Activated naive CD4-positive, alpha-beta T cell treated with anti-CD3 and anti-CD28 coated beads for 36 hours (primary cell): ENCODE measurements at regions of chr1 and their contacts with region 1.

Region 1: DNA sequence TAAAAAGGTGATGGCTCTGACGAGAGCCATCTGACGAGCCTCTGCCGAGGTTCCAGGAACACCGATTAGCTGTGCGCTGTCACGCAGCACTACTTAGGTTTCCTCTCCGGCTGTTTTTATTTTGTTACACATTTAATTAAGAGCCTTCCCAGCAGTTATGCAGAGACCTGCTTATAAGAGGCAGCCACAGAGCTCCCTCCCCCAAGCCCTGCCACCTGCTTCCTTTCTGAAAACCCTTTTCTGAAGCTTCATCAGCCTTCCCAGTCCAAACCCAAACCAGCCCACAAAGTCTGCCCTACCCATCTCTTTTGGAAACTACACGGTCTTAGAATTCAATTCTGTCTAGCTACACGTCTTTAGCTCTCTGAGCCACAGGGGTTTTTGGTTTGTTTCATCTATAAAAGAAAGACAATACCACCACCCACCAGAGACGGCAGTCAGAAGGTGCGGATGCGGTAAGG is 49.1 kb downstream of the ERI3 start:
- DNase-seq: peak; percentile 82
- H3K4me3 Mint-ChIP-seq: peak overlapping the region; percentile 26
- H3K27ac Mint-ChIP-seq: peak overlapping the region; percentile 95
- H3K4me1 Mint-ChIP-seq: peaks cover 34% of the 10 kb centered on the region
- H3K27me3 Mint-ChIP-seq: no peaks in the 10 kb centered on the region

Region 2: GRCh38 chr1:44237721-44238457 is 68.1 kb before region 1 on chr1:
- CTCF ChIA-PET with region 1: no interaction called
- intact Hi-C with region 1: no loop called
- DNase-seq: peak; percentile 62
- H3K4me3 Mint-ChIP-seq: no peak overlapping the region
- H3K27ac Mint-ChIP-seq: no peak overlapping the region
- H3K4me1 Mint-ChIP-seq: peaks cover 6% of the 10 kb centered on the region
- H3K27me3 Mint-ChIP-seq: no peaks in the 10 kb centered on the region

Region 3: GRCh38 chr1:44254392-44254910 is 51.5 kb before region 1 on chr1:
- CTCF ChIA-PET with region 1: interaction called, 3 read pairs
- intact Hi-C with region 1: loop called (anchors 1 kb)
- DNase-seq: peak; percentile 66
- H3K4me3 Mint-ChIP-seq: no peak overlapping the region
- H3K27ac Mint-ChIP-seq: no peak overlapping the region
- H3K4me1 Mint-ChIP-seq: no peaks in the 10 kb centered on the region
- H3K27me3 Mint-ChIP-seq: no peaks in the 10 kb centered on the region

Region 4: GRCh38 chr1:44263568-44264450 is 42.2 kb before region 1 on chr1:
- CTCF ChIA-PET with region 1: interaction called, 3 read pairs
- intact Hi-C with region 1: loop called (anchors 1 kb)
- DNase-seq: no peak
- H3K4me3 Mint-ChIP-seq: no peak overlapping the region
- H3K27ac Mint-ChIP-seq: no peak overlapping the region
- H3K4me1 Mint-ChIP-seq: peaks cover 27% of the 10 kb centered on the region
- H3K27me3 Mint-ChIP-seq: no peaks in the 10 kb centered on the region

Region 5: DNA sequence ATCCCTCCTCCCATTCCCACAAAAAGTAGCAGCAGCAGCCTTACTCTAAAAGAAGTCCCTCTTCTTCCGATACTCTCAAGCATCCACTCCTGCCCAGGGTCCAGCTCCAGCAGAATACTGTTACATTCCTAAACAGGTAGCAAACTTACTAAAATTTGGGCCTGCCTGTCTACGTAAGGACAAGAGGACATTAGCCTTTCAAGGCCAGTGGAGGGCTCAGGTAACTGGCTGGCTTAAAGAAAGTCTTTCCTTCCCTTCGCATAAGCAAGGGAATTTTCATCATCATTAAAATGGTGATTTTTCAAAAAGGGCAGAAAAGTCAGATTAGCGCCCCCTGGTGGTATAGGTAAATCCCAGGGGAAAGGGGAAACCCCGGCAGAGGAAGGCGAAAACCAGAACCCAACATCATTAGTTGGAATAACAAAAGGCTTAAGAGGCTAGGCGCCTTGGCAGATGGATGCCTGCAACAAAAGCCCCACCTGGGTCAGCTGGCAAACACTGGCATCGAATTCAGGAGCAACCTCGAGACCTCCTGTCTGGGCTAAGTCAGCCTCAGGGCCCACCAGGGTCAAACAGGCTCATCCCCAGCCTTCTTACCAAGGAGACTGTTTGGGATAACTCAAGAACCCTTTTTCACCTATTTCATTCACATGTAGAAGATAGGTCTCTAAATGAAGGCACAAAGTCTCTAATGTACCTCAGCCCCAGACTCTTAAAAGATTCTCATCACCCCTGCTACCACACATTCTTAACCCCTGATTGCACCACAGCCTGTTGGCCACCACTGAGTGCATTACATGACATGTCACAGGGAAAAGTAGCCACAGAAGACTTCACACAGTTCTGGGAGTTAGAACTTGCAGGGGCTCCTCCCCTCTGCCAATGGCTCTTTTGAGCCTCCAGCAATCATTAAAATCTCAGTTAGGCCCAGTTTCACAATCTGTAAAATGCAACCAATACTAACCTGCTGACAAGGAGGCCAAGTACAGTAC is 12.4 kb after region 1 on chr1:
- CTCF ChIA-PET with region 1: interaction called, 3 read pairs
- intact Hi-C with region 1: loop called (anchors 1 kb)
- DNase-seq: peak; percentile 75
- H3K4me3 Mint-ChIP-seq: no peak overlapping the region
- H3K27ac Mint-ChIP-seq: peak overlapping the region; percentile 34
- H3K4me1 Mint-ChIP-seq: peaks cover 11% of the 10 kb centered on the region
- H3K27me3 Mint-ChIP-seq: no peaks in the 10 kb centered on the region

Region 6: DNA sequence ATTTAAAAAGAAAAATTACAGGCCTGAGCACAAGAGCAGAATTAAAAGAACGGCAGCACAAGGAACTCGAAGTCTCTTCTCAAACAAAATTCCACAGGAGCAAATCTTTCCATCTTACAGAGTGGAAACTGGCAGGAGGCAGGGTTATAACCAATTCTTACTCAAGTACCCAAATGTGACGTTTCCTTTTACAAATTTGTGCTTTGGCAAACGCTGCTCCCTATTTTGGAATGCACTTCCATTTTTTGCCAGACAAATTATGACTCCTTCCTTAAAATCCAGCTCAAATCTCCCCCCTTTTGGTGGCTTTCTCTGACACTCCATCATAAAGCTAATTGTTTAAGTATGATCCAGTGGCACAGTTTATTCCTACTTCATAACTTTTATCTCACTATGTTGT is 41.3 kb after region 1 on chr1:
- CTCF ChIA-PET with region 1: no interaction called
- intact Hi-C with region 1: no loop called
- DNase-seq: no peak
- H3K4me3 Mint-ChIP-seq: no peak overlapping the region
- H3K27ac Mint-ChIP-seq: no peak overlapping the region
- H3K4me1 Mint-ChIP-seq: peaks cover 29% of the 10 kb centered on the region
- H3K27me3 Mint-ChIP-seq: no peaks in the 10 kb centered on the region

Region 7: GRCh38 chr1:44447051-44447810 is 141.2 kb after region 1 on chr1:
- CTCF ChIA-PET with region 1: no interaction called
- intact Hi-C with region 1: no loop called
- DNase-seq: no peak
- H3K4me3 Mint-ChIP-seq: no peak overlapping the region
- H3K27ac Mint-ChIP-seq: no peak overlapping the region
- H3K4me1 Mint-ChIP-seq: no peaks in the 10 kb centered on the region
- H3K27me3 Mint-ChIP-seq: peaks cover 4% of the 10 kb centered on the region